PC-3 (cell line): ENCODE measurements at regions of chr3 and their contacts with region 1.

Region 1: DNA sequence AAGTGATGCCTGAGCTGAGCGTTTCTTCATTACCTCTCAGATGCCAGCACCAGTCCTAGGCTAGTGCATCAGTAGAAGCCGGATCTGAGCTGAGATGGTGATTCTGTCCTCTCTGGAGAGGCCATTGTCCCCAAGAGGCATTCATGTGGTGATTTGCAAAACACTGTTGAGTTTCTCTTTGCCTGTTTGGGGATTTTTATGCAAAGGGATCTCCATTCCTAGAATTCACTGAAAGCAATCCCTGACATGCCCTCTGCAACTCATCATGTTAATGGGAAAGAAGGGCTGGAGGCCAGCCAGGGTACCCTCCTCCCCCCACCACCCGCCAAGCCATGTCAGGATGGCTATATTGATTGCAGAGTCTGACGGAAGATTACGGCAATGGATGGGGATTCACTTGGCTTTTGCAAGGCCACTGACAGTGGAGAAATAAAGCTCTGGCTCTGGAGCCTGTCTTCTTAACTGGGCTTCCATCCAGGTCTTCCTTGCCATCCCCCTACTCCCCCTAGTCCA is 166.5 kb upstream of the ROPN1 start:
- DNase-seq: no peak
- ATAC-seq: no peak
- H3K4me3 ChIP-seq: no peak overlapping the region
- H3K27ac ChIP-seq: no peak overlapping the region
- H3K4me1 ChIP-seq: peaks cover 10% of the 10 kb centered on the region
- H3K27me3 ChIP-seq: no peaks in the 10 kb centered on the region
- CTCF ChIP-seq: no peak

Region 2: DNA sequence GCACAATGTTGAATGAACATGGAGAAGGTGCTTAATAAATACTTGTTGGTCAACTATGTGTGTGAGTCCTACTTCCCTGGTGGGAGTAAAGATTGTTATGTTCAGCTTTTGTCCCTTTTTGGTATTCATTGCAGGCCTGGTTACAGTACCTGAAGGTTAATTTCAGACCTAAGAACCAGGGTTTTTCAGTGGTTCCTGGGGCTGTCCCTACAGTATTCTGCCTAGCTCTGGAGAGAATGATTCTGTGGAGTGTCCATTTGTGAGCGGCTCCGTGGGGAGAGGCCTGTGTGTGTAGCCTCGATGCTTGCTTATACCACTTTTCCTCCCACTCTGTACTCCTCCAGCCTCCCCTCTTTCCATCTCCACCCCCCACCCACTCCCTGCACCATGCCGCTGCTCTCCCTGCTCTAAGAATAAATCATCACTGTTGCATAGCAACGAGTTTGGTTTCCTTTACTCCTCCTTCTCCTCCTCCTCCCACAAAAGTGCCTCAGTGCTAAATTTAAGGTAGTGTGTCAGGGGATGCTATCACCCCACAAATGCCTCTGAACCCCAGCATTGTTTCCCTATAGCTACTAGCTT is 15.9 kb before region 1 on chr3:
- CTCF ChIA-PET with region 1: no interaction called
- POLR2A ChIA-PET with region 1: no interaction called
- intact Hi-C with region 1: no loop called
- DNase-seq: no peak
- ATAC-seq: no peak
- H3K4me3 ChIP-seq: no peak overlapping the region
- H3K27ac ChIP-seq: no peak overlapping the region
- H3K4me1 ChIP-seq: peaks cover 11% of the 10 kb centered on the region
- H3K27me3 ChIP-seq: no peaks in the 10 kb centered on the region
- CTCF ChIP-seq: no peak

Region 3: GRCh38 chr3:124174476-124174875 is 16.1 kb after region 1 on chr3:
- CTCF ChIA-PET with region 1: no interaction called
- POLR2A ChIA-PET with region 1: interaction called, 28 read pairs
- intact Hi-C with region 1: no loop called
- DNase-seq: peak; percentile 15
- ATAC-seq: no peak
- H3K4me3 ChIP-seq: no peak overlapping the region
- H3K27ac ChIP-seq: no peak overlapping the region
- H3K4me1 ChIP-seq: peaks cover 4% of the 10 kb centered on the region; the same call in 1 of the 2 replicates
- H3K27me3 ChIP-seq: no peaks in the 10 kb centered on the region
- CTCF ChIP-seq: no peak